HepG2 (cell line): ENCODE measurements at regions of chr9 and their contacts with region 1.

Region 1: GRCh38 chr9:15824310-15824709 is 271.5 kb downstream of the CCDC171 start:
- DNase-seq: peak; percentile 28
- ATAC-seq: peak; percentile 61; the same call in 2 of the 3 replicates
- H3K4me3 ChIP-seq: no peak overlapping the region
- H3K27ac ChIP-seq: no peak overlapping the region
- H3K4me1 ChIP-seq: no peaks in the 10 kb centered on the region
- H3K27me3 ChIP-seq: no peaks in the 10 kb centered on the region
- CTCF ChIP-seq: peak; percentile 40
- EP300 ChIP-seq: no peak
- POLR2A ChIP-seq: no peak
- RAD21 ChIP-seq: no peak

Region 2: GRCh38 chr9:15642369-15642962 is 181.8 kb before region 1 on chr9:
- CTCF ChIA-PET with region 1: no interaction called
- POLR2A ChIA-PET with region 1: no interaction called
- in situ Hi-C with region 1: no loop called
- intact Hi-C with region 1: loop called (anchors 5 kb)
- DNase-seq: peak; percentile 50
- ATAC-seq: no peak
- H3K4me3 ChIP-seq: no peak overlapping the region
- H3K27ac ChIP-seq: no peak overlapping the region
- H3K4me1 ChIP-seq: peaks cover 11% of the 10 kb centered on the region
- H3K27me3 ChIP-seq: no peaks in the 10 kb centered on the region
- CTCF ChIP-seq: peak; percentile 51
- EP300 ChIP-seq: no peak
- POLR2A ChIP-seq: no peak
- RAD21 ChIP-seq: no peak

Region 3: DNA sequence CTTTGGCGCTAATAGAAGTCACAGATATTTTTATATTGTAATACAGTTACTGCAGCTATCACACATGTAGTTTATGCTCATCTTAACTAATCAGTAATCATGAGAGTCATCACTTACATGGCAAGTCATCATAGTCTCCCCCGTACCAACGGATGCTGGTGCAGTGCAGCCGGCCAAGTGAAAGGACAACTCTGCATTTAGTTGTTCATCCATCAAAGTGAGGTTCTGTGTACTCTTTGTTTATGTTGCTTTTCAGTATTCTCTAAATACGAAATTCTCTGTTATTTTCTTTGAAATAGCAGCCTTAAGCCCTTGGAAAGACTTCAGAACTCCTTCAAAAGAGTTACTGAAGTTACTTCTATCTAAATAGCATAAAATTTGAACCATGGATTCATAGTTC is 54.8 kb before region 1 on chr9:
- CTCF ChIA-PET with region 1: no interaction called
- POLR2A ChIA-PET with region 1: no interaction called
- in situ Hi-C with region 1: no loop called
- intact Hi-C with region 1: no loop called
- DNase-seq: no peak
- ATAC-seq: no peak
- H3K4me3 ChIP-seq: no peak overlapping the region
- H3K27ac ChIP-seq: no peak overlapping the region
- H3K4me1 ChIP-seq: no peaks in the 10 kb centered on the region
- H3K27me3 ChIP-seq: no peaks in the 10 kb centered on the region
- CTCF ChIP-seq: no peak
- EP300 ChIP-seq: no peak
- POLR2A ChIP-seq: no peak
- RAD21 ChIP-seq: no peak